ENCODE measurements at regions of chr7 and their contacts with region 1.

Region 1: GRCh38 chr7:99408379-99409191 is at the starts of genes BUD31 and PDAP1:
- DNase-seq: peak; percentile 94

Region 2: DNA sequence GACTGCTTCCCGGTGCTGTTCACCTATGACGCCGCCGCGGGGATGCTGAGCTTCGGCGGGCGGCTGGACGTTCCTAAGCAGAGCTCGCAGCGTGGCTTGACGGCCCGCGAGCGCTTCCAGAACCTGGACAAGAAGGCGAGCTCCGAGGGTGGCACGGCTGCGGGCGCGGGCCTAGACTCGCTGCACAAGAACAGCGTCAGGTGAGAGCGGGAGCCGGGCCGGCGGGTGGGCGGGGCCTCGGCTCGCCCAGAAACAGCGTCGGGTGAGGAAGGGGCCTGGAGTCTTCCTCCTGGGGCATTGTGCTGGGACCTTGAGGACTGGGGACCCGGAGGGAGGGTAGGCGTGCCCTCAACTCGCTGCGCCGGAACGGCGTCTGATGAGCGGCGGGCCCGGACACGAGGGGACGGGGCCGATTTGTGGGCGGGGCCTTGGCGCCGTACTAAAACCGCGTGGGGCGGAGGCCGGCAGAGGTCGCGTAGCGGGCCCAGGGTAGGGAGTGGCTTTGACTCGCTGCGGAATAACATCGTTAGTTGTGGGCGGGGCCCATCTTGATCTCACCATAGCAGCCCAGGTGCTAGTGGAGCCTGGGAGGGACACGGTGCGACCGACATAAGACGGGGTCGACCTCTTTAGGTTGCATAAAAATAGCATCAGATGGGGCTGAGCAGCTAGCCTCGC is 15.8 kb before region 1 on chr7:
- CTCF ChIA-PET with region 1: no interaction called
- POLR2A ChIA-PET with region 1: interaction called, 24 read pairs
- DNase-seq: no peak

Region 3: GRCh38 chr7:99422186-99422585 is 13.6 kb after region 1 on chr7:
- CTCF ChIA-PET with region 1: no interaction called
- POLR2A ChIA-PET with region 1: interaction called, 16 read pairs
- DNase-seq: no peak

Region 4: GRCh38 chr7:99438573-99439480 is 30.2 kb after region 1 on chr7 and contains the starts of genes CPSF4 and PTCD1:
- CTCF ChIA-PET with region 1: no interaction called
- POLR2A ChIA-PET with region 1: interaction called, 20 read pairs
- DNase-seq: peak; percentile 97

Region 5: GRCh38 chr7:100380196-100380595 is 971.6 kb after region 1 on chr7:
- CTCF ChIA-PET with region 1: no interaction called
- POLR2A ChIA-PET with region 1: no interaction called
- DNase-seq: no peak